ENCODE measurements at regions of chr12 and their contacts with region 1.

Region 1: DNA sequence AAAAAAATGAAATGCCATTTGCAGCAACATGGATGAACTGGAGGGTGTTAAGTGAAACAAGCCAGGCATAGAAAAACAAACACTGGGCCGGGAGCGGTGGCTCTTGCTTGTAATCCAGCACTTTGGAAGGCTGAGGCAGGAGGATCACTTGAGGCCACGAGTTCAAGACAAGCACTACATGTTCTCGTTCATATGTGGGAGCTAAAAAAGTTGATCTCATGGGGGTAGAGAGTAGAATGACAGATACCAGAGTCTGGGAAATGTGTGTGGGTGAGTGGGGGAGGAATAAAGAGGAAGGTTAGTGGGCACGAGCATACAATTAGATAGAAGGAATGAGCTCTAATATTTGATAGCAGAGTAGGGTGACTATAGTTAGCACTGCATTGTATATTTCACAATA is 21.5 kb downstream of the CACNA2D4 start:
- DNase-seq: no peak
- ATAC-seq: no peak
- H3K4me3 ChIP-seq: no peak overlapping the region
- H3K27ac ChIP-seq: no peak overlapping the region
- H3K4me1 ChIP-seq: no peaks in the 10 kb centered on the region
- H3K27me3 ChIP-seq: no peaks in the 10 kb centered on the region; the same call in none of the 2 replicates
- CTCF ChIP-seq: no peak
- POLR2A ChIP-seq: no peak
- RAD21 ChIP-seq: no peak

Region 2: DNA sequence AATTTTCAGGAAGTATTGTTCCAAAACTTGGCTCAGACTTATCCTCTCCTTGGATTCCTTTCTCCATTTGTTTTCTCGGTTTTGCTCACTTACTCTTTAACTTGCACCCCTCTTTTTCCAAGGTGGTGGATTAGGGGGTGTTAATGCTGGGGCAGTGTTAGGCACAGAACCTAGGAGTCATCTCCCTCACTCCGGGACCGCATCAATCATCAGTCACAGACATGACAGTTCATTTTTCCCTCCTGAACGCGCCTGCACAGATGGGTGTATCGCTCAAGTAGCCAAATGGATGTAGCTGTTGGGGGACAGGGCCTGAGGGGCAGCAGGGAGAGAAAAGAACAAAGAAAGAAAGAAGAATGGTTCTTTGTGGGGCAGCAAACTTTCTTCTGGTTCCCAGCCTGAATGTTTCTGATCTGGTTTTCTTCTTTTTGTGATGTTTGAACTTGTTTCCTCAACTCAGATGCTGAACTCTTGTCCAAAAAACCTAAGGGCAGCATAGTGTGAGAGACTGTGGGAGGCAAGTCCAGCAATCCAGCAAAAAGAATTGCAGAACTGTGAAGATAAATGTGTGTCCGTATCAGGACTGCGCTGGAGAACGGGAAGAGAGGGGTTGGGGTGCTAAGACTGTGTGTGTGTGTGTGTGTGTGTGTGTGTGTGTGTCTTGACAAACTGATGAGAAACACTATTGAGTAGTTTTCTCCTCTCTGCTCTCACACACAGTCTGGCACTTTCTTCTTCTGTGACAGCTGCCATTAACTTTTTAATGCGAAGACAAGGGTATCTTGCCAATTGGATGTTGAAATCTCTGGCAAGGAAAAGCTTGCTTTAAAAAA is 433.7 kb before region 1 on chr12:
- CTCF ChIA-PET with region 1: no interaction called
- POLR2A ChIA-PET with region 1: no interaction called
- dilution Hi-C with region 1: no loop called
- in situ Hi-C with region 1: no loop called
- intact Hi-C with region 1: no loop called
- DNase-seq: no peak
- ATAC-seq: no peak
- H3K4me3 ChIP-seq: no peak overlapping the region
- H3K27ac ChIP-seq: no peak overlapping the region
- H3K4me1 ChIP-seq: no peaks in the 10 kb centered on the region; the same call in 1 of the 2 replicates
- H3K27me3 ChIP-seq: no peaks in the 10 kb centered on the region
- CTCF ChIP-seq: no peak
- POLR2A ChIP-seq: no peak
- RAD21 ChIP-seq: no peak

Region 3: GRCh38 chr12:1851151-1851701 is 45.7 kb before region 1 on chr12:
- CTCF ChIA-PET with region 1: no interaction called
- POLR2A ChIA-PET with region 1: no interaction called
- dilution Hi-C with region 1: no loop called
- in situ Hi-C with region 1: no loop called
- intact Hi-C with region 1: loop called (anchors 5 kb)
- DNase-seq: peak; percentile 56
- ATAC-seq: no peak
- H3K4me3 ChIP-seq: no peak overlapping the region
- H3K27ac ChIP-seq: no peak overlapping the region
- H3K4me1 ChIP-seq: no peaks in the 10 kb centered on the region
- H3K27me3 ChIP-seq: peaks cover 23% of the 10 kb centered on the region
- CTCF ChIP-seq: no peak
- POLR2A ChIP-seq: no peak
- RAD21 ChIP-seq: no peak

Region 4: GRCh38 chr12:1916371-1917171 is 19.6 kb after region 1 on chr12:
- CTCF ChIA-PET with region 1: no interaction called
- POLR2A ChIA-PET with region 1: no interaction called
- dilution Hi-C with region 1: no loop called
- in situ Hi-C with region 1: no loop called
- intact Hi-C with region 1: no loop called
- DNase-seq: no peak
- ATAC-seq: no peak
- H3K4me3 ChIP-seq: no peak overlapping the region
- H3K27ac ChIP-seq: no peak overlapping the region
- H3K4me1 ChIP-seq: no peaks in the 10 kb centered on the region
- H3K27me3 ChIP-seq: peaks cover 62% of the 10 kb centered on the region
- CTCF ChIP-seq: no peak
- POLR2A ChIP-seq: no peak
- RAD21 ChIP-seq: no peak